Activated naive CD4-positive, alpha-beta T cell treated with anti-CD3 and anti-CD28 coated beads for 36 hours (primary cell): ENCODE measurements at regions of chr17 and their contacts with region 1.

Region 1: GRCh38 chr17:5584383-5585286 is at the start of gene NLRP1:
- DNase-seq: peak; percentile 99
- H3K4me3 Mint-ChIP-seq: peak within 1 kb of the TSS; percentile 94
- H3K27ac Mint-ChIP-seq: peak within 1 kb of the TSS; percentile 98
- H3K4me1 Mint-ChIP-seq: peaks cover 64% of the 10 kb centered on the region
- H3K27me3 Mint-ChIP-seq: no peaks in the 10 kb centered on the region
- total RNA-seq, gene NLRP1: 44.9 to 49.4 TPM

Region 2: GRCh38 chr17:5191541-5192417 is 392.9 kb before region 1 on chr17 and contains the start of gene ZNF594:
- CTCF ChIA-PET with region 1: no interaction called
- intact Hi-C with region 1: loop called (anchors 10 kb)
- DNase-seq: peak; percentile 98
- H3K4me3 Mint-ChIP-seq: peak within 1 kb of the TSS; percentile 90
- H3K27ac Mint-ChIP-seq: peak within 1 kb of the TSS; percentile 82
- H3K4me1 Mint-ChIP-seq: peaks cover 31% of the 10 kb centered on the region
- H3K27me3 Mint-ChIP-seq: no peaks in the 10 kb centered on the region
- total RNA-seq, gene ZNF594: 3.9 to 4.1 TPM

Region 3: DNA sequence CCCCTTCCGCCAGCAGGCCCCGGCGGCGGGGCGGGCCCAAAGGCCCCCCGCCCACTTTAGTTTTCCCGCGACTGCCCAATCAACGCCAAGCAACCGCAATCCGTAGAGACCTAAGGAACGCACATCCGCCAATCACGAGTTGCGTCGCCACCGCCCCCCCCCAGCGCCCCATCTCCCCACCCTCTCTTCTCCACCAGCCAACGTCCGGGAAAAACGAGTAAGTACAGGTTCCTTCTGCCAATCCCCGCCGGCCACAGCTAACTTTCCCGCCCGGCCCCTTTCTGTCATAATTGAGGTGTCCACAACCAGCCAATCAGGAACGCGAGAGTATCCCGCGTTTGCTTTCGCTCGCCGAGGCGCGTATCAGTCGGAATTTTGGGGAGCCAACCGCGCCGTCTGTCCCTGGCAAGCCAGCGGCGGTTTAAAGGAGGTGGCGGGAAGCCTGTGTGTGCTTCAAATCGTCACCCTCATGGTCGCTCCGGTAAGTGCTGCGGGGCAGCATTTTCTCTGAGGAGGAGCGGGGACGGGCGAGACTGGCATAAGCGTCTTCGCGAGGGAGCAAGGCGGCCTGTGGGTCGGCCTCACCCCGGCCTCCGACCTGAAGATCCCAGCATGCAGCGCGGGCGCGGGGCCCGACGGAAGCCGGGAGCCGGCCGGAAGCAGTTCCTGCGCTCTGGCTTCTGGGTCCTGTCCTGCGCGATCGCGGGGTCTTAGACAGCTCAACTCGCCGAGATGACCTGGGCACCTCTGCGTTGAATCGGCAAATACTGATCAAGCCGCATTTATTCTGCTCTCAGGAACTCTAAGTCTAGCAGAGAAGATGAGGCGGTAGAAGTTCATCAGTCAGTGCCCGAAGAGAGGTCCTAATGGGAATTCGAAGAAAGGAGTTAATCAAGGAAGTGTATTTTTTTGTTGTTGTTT is 98.2 kb before region 1 on chr17 and contains the start of gene MIS12:
- CTCF ChIA-PET with region 1: no interaction called
- intact Hi-C with region 1: loop called (anchors 1 kb)
- DNase-seq: peak; percentile 99
- H3K4me3 Mint-ChIP-seq: peak within 1 kb of the TSS; percentile 97
- H3K27ac Mint-ChIP-seq: peak within 1 kb of the TSS; percentile 97
- H3K4me1 Mint-ChIP-seq: peaks cover 60% of the 10 kb centered on the region
- H3K27me3 Mint-ChIP-seq: no peaks in the 10 kb centered on the region
- total RNA-seq, gene MIS12: 37.2 to 37.6 TPM

Region 4: DNA sequence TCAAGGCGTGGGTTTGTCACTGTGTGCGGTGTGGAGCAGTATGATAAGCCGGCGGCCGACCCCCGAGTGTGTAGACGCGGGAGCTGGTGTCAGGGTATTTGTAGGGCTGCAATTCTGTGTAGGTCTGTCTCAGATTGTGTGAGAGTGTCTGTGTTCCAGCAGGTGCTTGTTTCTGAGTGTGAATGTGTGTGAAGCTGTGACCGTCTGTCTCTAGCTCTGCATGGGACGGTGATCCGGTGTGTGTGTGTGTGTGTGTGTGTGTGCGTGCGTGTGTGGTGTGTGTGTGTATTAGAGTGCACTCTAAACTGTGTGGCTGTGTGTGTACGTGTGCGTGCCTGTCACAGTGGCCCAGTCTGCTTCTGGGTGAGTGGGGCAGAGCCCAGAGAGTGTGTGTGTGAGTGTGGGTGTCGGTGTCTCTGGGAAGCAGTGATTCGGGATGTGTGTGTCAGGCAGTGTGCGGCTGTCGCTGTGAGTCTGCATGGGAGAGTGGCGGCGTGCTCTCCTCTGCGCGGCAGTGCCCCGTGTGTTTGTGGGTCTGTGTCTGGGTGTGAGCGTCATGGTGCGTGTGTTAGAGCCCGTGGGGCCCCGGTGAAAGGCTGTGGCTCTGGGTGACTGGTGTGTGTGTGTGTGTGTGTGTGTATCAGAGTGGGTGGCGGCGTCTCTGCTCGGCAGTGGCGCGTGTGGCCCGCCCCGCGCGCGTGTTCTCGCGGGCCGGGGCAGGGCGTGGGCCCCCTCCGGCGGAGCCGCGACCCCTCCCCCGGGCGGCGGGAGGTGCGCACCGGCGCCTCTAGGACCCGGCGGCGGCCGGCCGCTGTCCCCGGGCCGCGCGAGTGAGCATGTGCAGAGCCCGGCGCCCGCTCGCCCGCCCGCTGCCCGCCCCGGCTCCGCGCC is 485.1 kb after region 1 on chr17 and contains the start of gene WSCD1:
- CTCF ChIA-PET with region 1: no interaction called
- intact Hi-C with region 1: loop called (anchors 5 kb)
- DNase-seq: peak; percentile 13
- H3K4me3 Mint-ChIP-seq: peak within 1 kb of the TSS; percentile 63
- H3K27ac Mint-ChIP-seq: no peak within 1 kb of the TSS
- H3K4me1 Mint-ChIP-seq: peaks cover 10% of the 10 kb centered on the region
- H3K27me3 Mint-ChIP-seq: peaks cover 48% of the 10 kb centered on the region
- total RNA-seq, gene WSCD1: 0.86 to 1.0 TPM

Region 5: GRCh38 chr17:6421700-6422604 is 837.3 kb after region 1 on chr17:
- CTCF ChIA-PET with region 1: interaction called, 7 read pairs
- intact Hi-C with region 1: loop called (anchors 1 kb)
- DNase-seq: peak; percentile 84
- H3K4me3 Mint-ChIP-seq: no peak overlapping the region
- H3K27ac Mint-ChIP-seq: no peak overlapping the region
- H3K4me1 Mint-ChIP-seq: peaks cover 2% of the 10 kb centered on the region
- H3K27me3 Mint-ChIP-seq: peaks cover 6% of the 10 kb centered on the region

Region 6: GRCh38 chr17:6651357-6651918 is 1066.8 kb after region 1 on chr17 and contains the starts of genes C17orf100 and MED31:
- CTCF ChIA-PET with region 1: no interaction called
- intact Hi-C with region 1: loop called (anchors 5 kb)
- DNase-seq: peak; percentile 96
- H3K4me3 Mint-ChIP-seq: peak within 1 kb of the TSS; percentile 96
- H3K27ac Mint-ChIP-seq: peak within 1 kb of the TSS; percentile 96
- H3K4me1 Mint-ChIP-seq: peaks cover 63% of the 10 kb centered on the region
- H3K27me3 Mint-ChIP-seq: no peaks in the 10 kb centered on the region
- total RNA-seq, gene C17orf100: 0.99 to 1.2 TPM
- total RNA-seq, gene MED31: 21.7 to 22.5 TPM